SK-N-SH (cell line): ENCODE measurements at regions of chr1 and their contacts with region 1.

Region 1: DNA sequence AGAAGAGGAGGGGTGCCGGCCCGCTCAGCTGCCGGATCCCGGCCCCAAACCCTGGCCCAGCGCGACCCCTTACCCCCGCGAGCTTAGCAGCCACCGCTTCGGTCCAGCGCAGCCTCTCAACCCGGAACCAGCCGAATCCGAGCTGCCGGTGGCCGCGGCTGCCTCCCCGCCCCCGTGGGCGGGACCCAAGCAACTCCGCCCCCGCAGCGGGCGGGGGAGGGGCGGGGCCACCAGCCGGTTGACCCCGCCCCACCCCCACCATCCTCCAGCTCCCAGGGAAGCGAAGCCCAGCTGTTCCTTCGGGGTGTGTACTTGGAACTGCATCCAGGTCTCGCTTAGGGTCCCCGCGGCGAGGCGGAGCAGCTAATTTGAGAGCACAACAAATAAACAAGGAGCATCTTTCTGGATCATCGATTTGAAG is at the start of gene TRIM62:
- DNase-seq: peak; percentile 98
- H3K4me3 ChIP-seq: peak within 1 kb of the TSS; percentile 76 to 77
- H3K27ac ChIP-seq: peak within 1 kb of the TSS; percentile 42 to 69; a peak in 3 of 4 replicates
- H3K4me1 ChIP-seq: peaks cover 0 to 18% of the 10 kb centered on the region in 2 experiments; a peak in 2 of 4 replicates
- H3K27me3 ChIP-seq: peaks cover 4% of the 10 kb centered on the region; the same call in 1 of the 2 replicates
- CTCF ChIP-seq: no peak
- EP300 ChIP-seq: no peak
- RAD21 ChIP-seq: no peak
- polyA plus RNA-seq, gene TRIM62: 2.5 and 4.4 TPM in 2 replicates

Region 2: DNA sequence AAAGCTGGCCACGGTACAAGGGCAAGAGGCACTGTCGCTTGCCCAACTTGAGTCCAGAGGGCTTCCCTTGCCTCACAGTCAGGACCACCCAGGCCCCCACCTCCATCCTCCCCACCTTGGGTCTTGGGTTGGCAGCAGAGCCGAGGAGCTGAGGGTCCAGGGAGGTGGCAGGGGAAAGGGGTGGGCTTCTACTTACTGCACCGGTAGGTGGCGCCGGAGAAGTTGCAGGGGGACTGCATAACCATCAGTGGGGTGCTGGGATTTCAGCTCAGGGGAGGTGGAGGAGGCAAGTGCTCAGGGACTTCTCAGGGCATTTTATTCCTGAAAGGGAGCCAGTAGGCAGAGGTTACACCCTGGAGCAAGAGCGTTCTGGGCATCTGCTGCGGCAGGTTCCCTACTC is 44.1 kb before region 1 on chr1:
- CTCF ChIA-PET with region 1: interaction called, 10 read pairs
- POLR2A ChIA-PET with region 1: interaction called, 3 read pairs
- DNase-seq: peak; percentile 46
- H3K4me3 ChIP-seq: no peak overlapping the region
- H3K27ac ChIP-seq: peak overlapping the region in 1 of 2 experiments; percentile 36; a peak in 1 of 4 replicates
- H3K4me1 ChIP-seq: peaks cover 0 to 30% of the 10 kb centered on the region in 2 experiments; a peak in 1 of 4 replicates
- H3K27me3 ChIP-seq: no peaks in the 10 kb centered on the region
- CTCF ChIP-seq: peak; percentile 10; the same call in 1 of the 2 replicates
- EP300 ChIP-seq: no peak
- RAD21 ChIP-seq: peak; percentile 18; the same call in 1 of the 2 replicates

Region 3: GRCh38 chr1:33153650-33154049 is 28.3 kb before region 1 on chr1:
- CTCF ChIA-PET with region 1: no interaction called
- POLR2A ChIA-PET with region 1: no interaction called
- DNase-seq: no peak
- H3K4me3 ChIP-seq: no peak overlapping the region
- H3K27ac ChIP-seq: peak overlapping the region in 1 of 2 experiments; percentile 74; a peak in 2 of 4 replicates
- H3K4me1 ChIP-seq: peaks cover 0 to 19% of the 10 kb centered on the region in 2 experiments; a peak in 1 of 4 replicates
- H3K27me3 ChIP-seq: no peaks in the 10 kb centered on the region
- CTCF ChIP-seq: no peak
- EP300 ChIP-seq: no peak
- RAD21 ChIP-seq: no peak

Region 4: GRCh38 chr1:33255347-33256311 is 73.7 kb after region 1 on chr1:
- CTCF ChIA-PET with region 1: no interaction called
- POLR2A ChIA-PET with region 1: interaction called, 10 read pairs
- DNase-seq: peak; percentile 90
- H3K4me3 ChIP-seq: peak overlapping the region; percentile 50 to 86; a peak in 3 of 4 replicates
- H3K27ac ChIP-seq: peak overlapping the region; percentile 61 to 94
- H3K4me1 ChIP-seq: peaks cover 16 to 32% of the 10 kb centered on the region in 2 experiments; a peak in 3 of 4 replicates
- H3K27me3 ChIP-seq: no peaks in the 10 kb centered on the region
- CTCF ChIP-seq: no peak
- EP300 ChIP-seq: no peak
- RAD21 ChIP-seq: no peak

Region 5: DNA sequence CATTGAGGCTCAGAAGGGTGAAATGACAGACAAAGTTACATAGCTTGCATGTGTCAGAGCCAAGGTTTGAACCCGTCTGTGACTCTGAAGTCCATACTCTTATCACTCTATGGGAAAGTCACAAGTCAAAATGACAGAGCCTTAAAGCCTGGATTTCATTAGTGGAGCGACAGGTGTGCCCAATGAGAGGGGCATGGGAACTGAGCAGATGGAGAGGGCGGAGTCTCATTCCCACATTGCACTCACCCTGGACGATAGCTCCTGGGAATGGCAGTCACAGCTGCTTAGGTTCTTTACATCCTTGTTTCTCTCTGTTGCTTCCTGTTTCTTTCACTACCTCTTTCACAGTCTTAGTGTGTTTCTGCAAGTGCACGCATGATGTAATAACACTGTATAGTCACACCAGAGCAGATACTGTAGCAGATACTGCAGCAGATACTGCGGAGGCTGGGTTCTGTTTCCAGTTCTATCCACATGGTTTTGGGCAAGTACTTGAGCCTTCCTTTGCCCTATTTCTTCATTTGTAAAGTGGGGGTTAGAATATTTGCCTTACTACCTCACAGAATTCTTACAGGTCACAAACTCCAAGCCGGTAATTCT is 417.7 kb after region 1 on chr1:
- CTCF ChIA-PET with region 1: no interaction called
- POLR2A ChIA-PET with region 1: no interaction called
- DNase-seq: no peak
- H3K4me3 ChIP-seq: no peak overlapping the region
- H3K27ac ChIP-seq: no peak overlapping the region
- H3K4me1 ChIP-seq: no peaks in the 10 kb centered on the region; a peak in 1 of 4 replicates
- H3K27me3 ChIP-seq: no peaks in the 10 kb centered on the region
- CTCF ChIP-seq: no peak
- EP300 ChIP-seq: no peak
- RAD21 ChIP-seq: no peak